Activated CD4-positive, alpha-beta memory T cell treated with anti-CD3 and anti-CD28 coated beads for 36 hours (primary cell): ENCODE measurements at regions of chr19 and their contacts with region 1.

Region 1: GRCh38 chr19:47447470-47448359 is 24.0 kb downstream of the SLC8A2 start:
- DNase-seq: peak; percentile 80
- H3K4me3 Mint-ChIP-seq: peak overlapping the region; percentile 42
- H3K27ac Mint-ChIP-seq: no peak overlapping the region
- H3K4me1 Mint-ChIP-seq: peaks cover 39% of the 10 kb centered on the region
- H3K27me3 Mint-ChIP-seq: peaks cover 52% of the 10 kb centered on the region

Region 2: DNA sequence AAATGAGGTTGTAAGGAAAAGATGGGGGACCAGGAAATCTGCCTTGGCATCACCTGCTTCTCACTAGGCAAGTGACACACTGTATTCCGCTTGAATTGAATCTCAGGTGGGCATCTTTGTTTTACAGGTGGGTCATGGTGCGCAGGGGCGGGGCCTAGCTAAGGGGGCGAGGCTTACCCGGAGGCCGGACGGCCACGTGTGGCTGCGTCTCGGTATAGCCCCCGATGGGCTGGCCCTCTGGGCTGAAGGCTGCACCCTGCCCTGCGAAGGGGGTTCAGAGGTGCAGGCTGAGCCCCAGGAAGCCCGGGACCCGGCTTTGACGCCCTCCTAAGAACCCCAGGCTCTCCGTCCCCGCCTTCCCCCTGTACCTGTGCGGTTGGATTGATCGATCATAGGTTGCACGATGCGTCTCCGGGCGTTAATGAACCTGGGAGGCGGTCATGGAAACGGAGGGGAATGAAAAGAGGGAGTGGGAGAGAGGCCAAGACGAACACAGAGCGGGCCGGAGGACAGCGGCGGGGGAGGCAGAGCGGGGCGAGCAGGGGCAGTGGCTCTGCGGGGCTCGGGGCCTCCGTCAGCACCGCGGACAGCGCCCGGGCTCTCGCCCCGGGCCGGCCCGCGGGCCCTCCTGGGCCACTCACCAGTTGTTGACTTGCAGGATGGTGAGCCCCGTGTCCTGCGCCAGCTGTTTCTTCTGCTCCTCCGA is 40.9 kb before region 1 on chr19:
- CTCF ChIA-PET with region 1: no interaction called
- POLR2A ChIA-PET with region 1: no interaction called
- intact Hi-C with region 1: no loop called
- DNase-seq: no peak
- H3K4me3 Mint-ChIP-seq: no peak overlapping the region
- H3K27ac Mint-ChIP-seq: no peak overlapping the region
- H3K4me1 Mint-ChIP-seq: no peaks in the 10 kb centered on the region
- H3K27me3 Mint-ChIP-seq: peaks cover 44% of the 10 kb centered on the region

Region 3: DNA sequence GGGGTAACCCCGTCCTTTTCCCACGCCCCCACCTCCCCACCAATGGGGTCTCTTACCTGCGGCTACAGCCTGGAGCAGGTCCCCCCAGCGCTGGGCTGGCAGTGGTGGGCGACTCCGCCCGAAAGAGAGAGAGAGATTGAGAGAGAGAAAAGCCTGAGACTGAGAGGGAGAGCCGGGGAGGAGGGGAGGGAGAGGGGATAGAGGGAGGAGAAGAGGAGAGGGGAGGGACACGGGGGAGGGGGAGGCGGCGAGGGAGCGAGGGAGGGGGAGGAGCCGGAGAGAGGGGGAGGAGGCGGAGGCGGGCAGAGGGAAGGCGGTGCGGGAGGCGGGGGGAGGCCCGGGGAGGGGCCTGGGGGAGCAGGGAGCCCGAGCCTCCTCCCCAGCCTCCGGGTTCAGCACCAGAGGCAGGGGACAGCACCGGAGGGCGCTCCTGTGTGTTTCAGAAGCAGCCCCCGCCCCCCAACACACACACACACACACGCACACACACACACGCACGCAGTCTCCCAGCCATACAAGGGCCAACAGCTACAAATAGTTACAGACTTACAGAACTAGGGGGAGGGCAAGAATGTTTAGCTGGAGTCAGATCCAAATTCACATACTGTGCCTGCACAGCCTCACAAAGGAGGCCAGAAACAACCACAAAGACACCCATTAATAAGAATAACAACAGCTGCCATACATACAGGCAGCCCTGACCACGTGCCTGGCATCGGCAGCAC is 24.2 kb after region 1 on chr19 and contains the start of gene SLC8A2:
- CTCF ChIA-PET with region 1: no interaction called
- POLR2A ChIA-PET with region 1: no interaction called
- intact Hi-C with region 1: loop called (anchors 1 kb)
- DNase-seq: peak; percentile 72
- H3K4me3 Mint-ChIP-seq: no peak within 1 kb of the TSS
- H3K27ac Mint-ChIP-seq: no peak within 1 kb of the TSS
- H3K4me1 Mint-ChIP-seq: peaks cover 9% of the 10 kb centered on the region
- H3K27me3 Mint-ChIP-seq: peaks cover 45% of the 10 kb centered on the region
- total RNA-seq, gene SLC8A2: 0.14 TPM in 1 of 2 experiments, not detected in the other

Region 4: DNA sequence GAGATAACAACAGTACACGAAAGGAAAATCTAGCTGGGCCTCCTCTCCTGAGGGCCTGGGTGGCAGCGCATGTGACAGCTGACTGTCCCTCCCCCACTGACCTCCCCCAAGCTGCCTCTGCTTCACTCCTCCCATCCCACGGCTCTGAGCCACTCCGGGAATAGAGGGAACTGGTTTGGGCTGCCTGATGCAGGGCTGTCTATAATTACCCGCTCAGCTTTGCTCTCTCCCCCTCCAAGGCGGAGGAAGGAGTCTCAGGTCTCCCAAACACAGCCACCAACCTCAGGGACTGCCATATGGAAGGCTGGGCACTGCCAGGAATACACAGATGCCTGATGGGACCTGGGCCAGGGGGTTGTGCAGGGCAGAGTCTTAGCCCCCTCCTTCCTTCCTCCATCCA is 59.3 kb after region 1 on chr19:
- CTCF ChIA-PET with region 1: no interaction called
- POLR2A ChIA-PET with region 1: no interaction called
- intact Hi-C with region 1: no loop called
- DNase-seq: no peak
- H3K4me3 Mint-ChIP-seq: no peak overlapping the region
- H3K27ac Mint-ChIP-seq: no peak overlapping the region
- H3K4me1 Mint-ChIP-seq: peaks cover 23% of the 10 kb centered on the region
- H3K27me3 Mint-ChIP-seq: no peaks in the 10 kb centered on the region